A549 (cell line): ENCODE measurements at regions of chr17 and their contacts with region 1.

Region 1: DNA sequence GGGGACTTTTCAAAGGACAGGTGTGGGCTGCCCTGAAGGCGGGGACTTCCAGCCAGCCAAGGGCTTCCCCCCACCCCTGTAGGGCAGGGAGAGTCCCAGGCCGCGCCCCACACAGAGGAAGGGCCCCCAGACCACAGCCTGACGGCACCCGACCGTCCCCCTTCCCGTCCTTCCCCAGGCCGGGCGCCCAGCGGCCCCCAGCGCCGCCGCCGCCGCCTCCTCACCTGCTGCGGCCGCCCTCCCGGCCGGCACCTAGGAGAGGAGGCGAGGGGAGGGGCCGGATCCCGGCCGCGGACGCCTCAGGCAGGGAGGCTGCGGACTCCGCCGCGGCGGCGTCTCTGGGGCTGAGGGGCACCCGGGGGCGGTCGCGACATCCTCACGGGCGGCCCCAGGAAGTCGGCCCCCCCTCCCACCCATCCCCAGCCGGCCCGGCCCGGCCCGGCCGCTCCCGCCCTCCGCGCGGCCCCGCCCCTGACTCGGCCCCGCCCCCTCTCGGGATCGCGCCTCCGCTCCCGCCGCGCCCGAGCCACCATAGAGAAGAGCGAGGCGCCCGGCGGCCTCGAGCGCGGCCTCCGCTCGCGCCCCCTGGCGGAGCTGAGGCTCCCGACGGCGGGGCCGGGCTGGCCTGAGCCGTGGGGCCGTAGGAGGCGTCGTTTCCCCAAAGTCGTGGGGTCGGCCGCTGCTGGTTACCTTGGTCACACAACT is 25.5 kb upstream of the RFFL start:
- DNase-seq: peak in 1 of 2 experiments; percentile 86
- ATAC-seq: peak; percentile 70 to 87
- H3K4me3 ChIP-seq: peak overlapping the region; percentile 90
- H3K27ac ChIP-seq: peak overlapping the region; percentile 96
- H3K4me1 ChIP-seq: peaks cover 42% of the 10 kb centered on the region
- CTCF ChIP-seq: peak; percentile 98
- EP300 ChIP-seq: no peak
- POLR2A ChIP-seq: no peak
- RAD21 ChIP-seq: peak; percentile 59 to 82

Region 2: DNA sequence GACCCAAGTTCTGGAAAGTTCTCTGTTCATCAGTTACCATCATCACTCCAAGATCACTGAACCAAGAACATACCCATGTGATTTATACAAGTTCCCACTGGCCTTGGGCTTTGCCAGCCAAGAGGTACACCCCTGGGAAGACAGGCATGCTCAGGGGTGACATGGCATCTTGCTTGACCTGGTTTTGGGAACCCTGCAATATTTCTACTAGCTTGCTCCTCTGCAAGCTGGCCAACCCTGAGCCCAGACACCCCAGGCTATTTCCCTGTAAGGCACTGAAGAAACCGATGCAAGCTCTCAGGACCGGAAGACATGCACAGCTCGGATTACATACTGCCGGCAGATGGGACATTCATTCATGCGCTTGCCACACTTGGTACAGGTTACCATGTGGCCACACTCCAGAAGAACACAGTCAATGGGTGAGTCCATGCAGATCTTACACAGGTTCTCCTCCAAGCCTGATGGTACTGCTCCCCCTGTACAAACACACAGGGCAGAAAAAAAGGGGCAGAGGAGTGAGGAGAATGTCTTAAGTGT is 77.3 kb before region 1 on chr17:
- CTCF ChIA-PET with region 1: interaction called, 19 read pairs
- POLR2A ChIA-PET with region 1: no interaction called
- DNase-seq: no peak
- ATAC-seq: no peak
- H3K4me3 ChIP-seq: no peak overlapping the region
- H3K27ac ChIP-seq: no peak overlapping the region
- H3K4me1 ChIP-seq: no peaks in the 10 kb centered on the region
- CTCF ChIP-seq: no peak
- EP300 ChIP-seq: no peak
- POLR2A ChIP-seq: no peak
- RAD21 ChIP-seq: no peak

Region 3: GRCh38 chr17:35046740-35047283 is 42.2 kb before region 1 on chr17:
- CTCF ChIA-PET with region 1: interaction called, 11 read pairs
- POLR2A ChIA-PET with region 1: no interaction called
- DNase-seq: no peak
- ATAC-seq: peak; percentile 49 to 61; a peak in 4 of 6 replicates
- H3K4me3 ChIP-seq: no peak overlapping the region
- H3K27ac ChIP-seq: peak overlapping the region; percentile 17 to 51; a peak in 5 of 6 replicates
- H3K4me1 ChIP-seq: peaks cover 59% of the 10 kb centered on the region
- CTCF ChIP-seq: no peak
- EP300 ChIP-seq: no peak
- POLR2A ChIP-seq: no peak
- RAD21 ChIP-seq: no peak

Region 4: DNA sequence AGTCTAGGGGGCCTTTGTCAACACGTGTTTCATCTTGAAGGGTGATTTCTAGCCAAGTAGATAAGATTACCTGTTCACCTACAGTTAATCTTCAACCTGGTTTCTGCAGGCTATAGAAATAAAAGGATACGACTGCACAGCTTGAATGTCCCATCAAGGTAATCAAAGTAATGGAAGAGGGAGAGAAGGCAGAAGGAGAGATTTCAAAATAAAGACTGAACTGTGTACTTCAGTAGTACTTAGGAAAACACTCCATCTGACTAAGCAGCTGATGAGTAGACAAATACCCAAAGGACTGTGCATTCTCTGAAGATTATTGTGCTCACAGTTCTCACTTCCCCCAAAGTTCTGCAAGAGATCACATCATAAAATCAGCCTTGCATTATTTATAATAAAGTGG is 19.7 kb before region 1 on chr17:
- CTCF ChIA-PET with region 1: interaction called, 38 read pairs
- POLR2A ChIA-PET with region 1: interaction called, 17 read pairs
- DNase-seq: no peak
- ATAC-seq: peak in 1 of 2 experiments; percentile 60; a peak in 5 of 6 replicates
- H3K4me3 ChIP-seq: no peak overlapping the region
- H3K27ac ChIP-seq: peak overlapping the region; percentile 30 to 69; a peak in 5 of 6 replicates
- H3K4me1 ChIP-seq: peaks cover 68% of the 10 kb centered on the region
- CTCF ChIP-seq: no peak
- EP300 ChIP-seq: no peak
- POLR2A ChIP-seq: no peak
- RAD21 ChIP-seq: no peak

Region 5: GRCh38 chr17:35103271-35103670 is 14.2 kb after region 1 on chr17:
- CTCF ChIA-PET with region 1: interaction called, 43 read pairs
- POLR2A ChIA-PET with region 1: interaction called, 4 read pairs
- DNase-seq: no peak
- ATAC-seq: no peak
- H3K4me3 ChIP-seq: no peak overlapping the region
- H3K27ac ChIP-seq: no peak overlapping the region
- H3K4me1 ChIP-seq: no peaks in the 10 kb centered on the region
- CTCF ChIP-seq: no peak
- EP300 ChIP-seq: no peak
- POLR2A ChIP-seq: no peak
- RAD21 ChIP-seq: no peak

Region 6: GRCh38 chr17:35170968-35171771 is 82.1 kb after region 1 on chr17:
- CTCF ChIA-PET with region 1: no interaction called
- POLR2A ChIA-PET with region 1: no interaction called
- DNase-seq: peak; percentile 37 to 49
- ATAC-seq: peak; percentile 67 to 79; a peak in 5 of 6 replicates
- H3K4me3 ChIP-seq: no peak overlapping the region
- H3K27ac ChIP-seq: no peak overlapping the region
- H3K4me1 ChIP-seq: peaks cover 6% of the 10 kb centered on the region; the same call in 2 of the 3 replicates
- CTCF ChIP-seq: peak; percentile 81
- EP300 ChIP-seq: no peak
- POLR2A ChIP-seq: no peak
- RAD21 ChIP-seq: peak; percentile 75 to 89